GM12878 (cell line): ENCODE measurements at regions of chr3 and their contacts with region 1.

Region 1: GRCh38 chr3:112013058-112013783 is 14.5 kb downstream of the TAGLN3 start:
- DNase-seq: no peak
- ATAC-seq: peak; percentile 94
- H3K4me3 ChIP-seq: no peak overlapping the region
- H3K27ac ChIP-seq: no peak overlapping the region
- H3K4me1 ChIP-seq: no peaks in the 10 kb centered on the region
- H3K27me3 ChIP-seq: no peaks in the 10 kb centered on the region; a peak in 1 of 4 replicates
- CTCF ChIP-seq: peak; percentile 70 to 80 (median 72)
- EP300 ChIP-seq: no peak
- POLR2A ChIP-seq: no peak
- RAD21 ChIP-seq: peak; percentile 81

Region 2: DNA sequence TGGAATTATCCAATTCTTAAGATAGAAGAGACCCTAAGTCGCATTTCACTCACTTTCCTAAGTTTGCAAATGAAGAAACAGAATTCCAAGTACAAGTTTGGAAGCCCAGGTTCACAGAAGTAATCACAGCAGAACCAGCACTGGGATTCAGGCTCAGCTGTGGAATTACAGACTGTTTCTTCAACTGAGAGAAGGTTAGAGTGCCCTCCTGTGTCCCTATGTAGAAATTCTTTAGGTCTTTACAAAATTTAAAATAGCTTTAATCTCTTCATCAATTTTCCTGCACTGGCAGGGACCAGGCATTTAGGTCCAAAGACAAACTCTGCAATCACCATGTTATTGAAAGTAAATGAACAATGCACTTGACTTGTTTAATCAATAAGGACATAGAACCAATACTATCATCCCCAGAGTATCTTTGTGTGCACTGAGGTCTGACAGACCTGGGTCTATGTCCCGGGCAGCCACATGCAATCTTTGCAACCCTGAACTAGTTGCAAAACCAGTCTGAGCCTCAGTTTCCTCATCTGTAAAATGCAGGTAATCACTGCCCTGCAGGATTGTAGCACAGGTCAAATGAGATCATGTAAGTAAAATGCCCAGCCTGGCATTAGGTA is 321.8 kb before region 1 on chr3:
- CTCF ChIA-PET with region 1: interaction called, 11 read pairs
- POLR2A ChIA-PET with region 1: no interaction called
- RAD21 ChIA-PET with region 1: interaction called, 6 read pairs
- SMC1A ChIA-PET with region 1: interaction called, 8 read pairs
- in situ Hi-C with region 1: no loop called
- intact Hi-C with region 1: no loop called
- DNase-seq: no peak
- ATAC-seq: peak; percentile 63
- H3K4me3 ChIP-seq: no peak overlapping the region
- H3K27ac ChIP-seq: no peak overlapping the region
- H3K4me1 ChIP-seq: peaks cover 6% of the 10 kb centered on the region; the same call in 1 of the 2 replicates
- H3K27me3 ChIP-seq: no peaks in the 10 kb centered on the region
- CTCF ChIP-seq: peak; percentile 24 to 44 (median 31); a peak in 4 of 6 replicates
- EP300 ChIP-seq: no peak
- POLR2A ChIP-seq: no peak
- RAD21 ChIP-seq: peak; percentile 52

Region 3: DNA sequence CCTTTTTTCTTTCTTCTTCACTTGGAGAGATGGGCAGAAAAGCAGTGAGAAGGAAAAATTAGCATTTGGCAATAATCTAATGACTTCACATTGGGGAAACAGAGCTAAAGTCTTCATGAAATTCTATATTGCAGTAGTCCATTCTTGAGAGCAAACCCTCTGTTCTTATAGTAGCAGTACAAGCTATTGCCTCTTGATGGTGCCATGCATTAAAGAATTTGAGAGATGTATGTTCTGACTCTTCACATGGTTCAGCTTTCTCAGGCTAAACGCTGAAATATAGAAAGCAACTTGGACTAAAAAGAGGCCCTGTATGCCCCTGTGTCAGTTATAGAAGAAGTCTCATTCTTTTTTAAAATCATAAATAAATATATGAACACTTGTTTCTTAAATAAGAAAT is 118.1 kb before region 1 on chr3:
- CTCF ChIA-PET with region 1: interaction called, 25 read pairs
- POLR2A ChIA-PET with region 1: no interaction called
- RAD21 ChIA-PET with region 1: interaction called, 17 read pairs
- SMC1A ChIA-PET with region 1: interaction called, 17 read pairs
- in situ Hi-C with region 1: no loop called
- intact Hi-C with region 1: no loop called
- DNase-seq: no peak
- ATAC-seq: peak; percentile 71
- H3K4me3 ChIP-seq: no peak overlapping the region
- H3K27ac ChIP-seq: no peak overlapping the region
- H3K4me1 ChIP-seq: no peaks in the 10 kb centered on the region
- H3K27me3 ChIP-seq: peaks cover 0 to 1% of the 10 kb centered on the region in 2 experiments; a peak in 1 of 4 replicates
- CTCF ChIP-seq: peak; percentile 11 to 37 (median 26); a peak in 2 of 6 replicates
- EP300 ChIP-seq: no peak
- POLR2A ChIP-seq: no peak
- RAD21 ChIP-seq: peak; percentile 36; the same call in 1 of the 2 replicates

Region 4: GRCh38 chr3:111972891-111973290 is 40.3 kb before region 1 on chr3:
- CTCF ChIA-PET with region 1: interaction called, 90 read pairs
- POLR2A ChIA-PET with region 1: interaction called, 3 read pairs
- RAD21 ChIA-PET with region 1: interaction called, 53 read pairs
- SMC1A ChIA-PET with region 1: interaction called, 70 read pairs
- in situ Hi-C with region 1: no loop called
- intact Hi-C with region 1: no loop called
- DNase-seq: no peak
- ATAC-seq: no peak
- H3K4me3 ChIP-seq: no peak overlapping the region
- H3K27ac ChIP-seq: no peak overlapping the region
- H3K4me1 ChIP-seq: no peaks in the 10 kb centered on the region
- H3K27me3 ChIP-seq: no peaks in the 10 kb centered on the region
- CTCF ChIP-seq: no peak
- EP300 ChIP-seq: no peak
- POLR2A ChIP-seq: no peak
- RAD21 ChIP-seq: no peak

Region 5: GRCh38 chr3:111998636-111999483 is 14.4 kb before region 1 on chr3 and contains the start of gene TAGLN3:
- CTCF ChIA-PET with region 1: interaction called, 467 read pairs
- POLR2A ChIA-PET with region 1: interaction called, 8 read pairs
- RAD21 ChIA-PET with region 1: interaction called, 158 read pairs
- SMC1A ChIA-PET with region 1: interaction called, 417 read pairs
- in situ Hi-C with region 1: no loop called
- intact Hi-C with region 1: no loop called
- DNase-seq: no peak
- ATAC-seq: peak; percentile 66
- H3K4me3 ChIP-seq: peak within 1 kb of the TSS; percentile 66
- H3K27ac ChIP-seq: no peak within 1 kb of the TSS
- H3K4me1 ChIP-seq: peaks cover 6% of the 10 kb centered on the region; the same call in 1 of the 2 replicates
- H3K27me3 ChIP-seq: peaks cover 0 to 2% of the 10 kb centered on the region in 2 experiments; a peak in 3 of 4 replicates
- CTCF ChIP-seq: no peak
- EP300 ChIP-seq: no peak
- POLR2A ChIP-seq: no peak
- RAD21 ChIP-seq: no peak
- polyA plus RNA-seq, gene TAGLN3: 0.07 TPM in 1 of 2 experiments, not detected in the other